Activated T-helper 1 cell treated with anti-CD3 and anti-CD28 coated beads, Interleukin-12 subunit alpha, Interleukin-12 subunit beta, Interleukin-2, Interleukin-4 antibody, amounts not matched to agents 30 ng/mL and 10 ng/mL and 1 ng/mL, durations not matched to agents 14 hours and 24 hours and 36 hours (primary cell): ENCODE measurements at regions of chr20 and their contacts with region 1.

Region 1: DNA sequence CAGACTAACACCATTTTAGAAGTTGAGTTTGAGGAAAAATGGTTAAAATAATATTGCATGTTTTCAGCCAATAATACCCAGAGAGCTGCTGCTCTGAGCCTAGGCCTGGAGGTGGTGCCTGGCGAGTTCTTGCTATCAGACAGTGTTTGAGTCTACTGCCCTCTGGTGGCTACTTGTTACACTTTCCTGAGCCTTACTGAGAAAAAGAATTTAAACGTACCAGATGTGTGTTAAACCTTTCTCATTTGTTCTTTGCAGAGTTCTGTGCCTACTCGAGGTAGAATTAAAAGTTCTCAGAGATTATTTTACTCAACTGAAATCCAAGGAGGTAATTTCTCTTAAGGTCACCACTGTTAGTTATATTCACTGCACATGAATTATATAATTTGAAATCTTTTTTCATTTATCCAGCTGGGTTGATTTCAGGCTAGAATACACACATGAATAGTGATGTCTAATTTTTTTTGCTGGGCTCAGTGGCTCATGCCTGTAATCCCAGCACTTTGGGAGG is 38.2 kb downstream of the SHLD1 start:
- DNase-seq: peak; percentile 66
- H3K4me3 Mint-ChIP-seq: no peak overlapping the region
- H3K27ac Mint-ChIP-seq: no peak overlapping the region
- H3K4me1 Mint-ChIP-seq: peaks cover 5% of the 10 kb centered on the region
- H3K27me3 Mint-ChIP-seq: no peaks in the 10 kb centered on the region

Region 2: DNA sequence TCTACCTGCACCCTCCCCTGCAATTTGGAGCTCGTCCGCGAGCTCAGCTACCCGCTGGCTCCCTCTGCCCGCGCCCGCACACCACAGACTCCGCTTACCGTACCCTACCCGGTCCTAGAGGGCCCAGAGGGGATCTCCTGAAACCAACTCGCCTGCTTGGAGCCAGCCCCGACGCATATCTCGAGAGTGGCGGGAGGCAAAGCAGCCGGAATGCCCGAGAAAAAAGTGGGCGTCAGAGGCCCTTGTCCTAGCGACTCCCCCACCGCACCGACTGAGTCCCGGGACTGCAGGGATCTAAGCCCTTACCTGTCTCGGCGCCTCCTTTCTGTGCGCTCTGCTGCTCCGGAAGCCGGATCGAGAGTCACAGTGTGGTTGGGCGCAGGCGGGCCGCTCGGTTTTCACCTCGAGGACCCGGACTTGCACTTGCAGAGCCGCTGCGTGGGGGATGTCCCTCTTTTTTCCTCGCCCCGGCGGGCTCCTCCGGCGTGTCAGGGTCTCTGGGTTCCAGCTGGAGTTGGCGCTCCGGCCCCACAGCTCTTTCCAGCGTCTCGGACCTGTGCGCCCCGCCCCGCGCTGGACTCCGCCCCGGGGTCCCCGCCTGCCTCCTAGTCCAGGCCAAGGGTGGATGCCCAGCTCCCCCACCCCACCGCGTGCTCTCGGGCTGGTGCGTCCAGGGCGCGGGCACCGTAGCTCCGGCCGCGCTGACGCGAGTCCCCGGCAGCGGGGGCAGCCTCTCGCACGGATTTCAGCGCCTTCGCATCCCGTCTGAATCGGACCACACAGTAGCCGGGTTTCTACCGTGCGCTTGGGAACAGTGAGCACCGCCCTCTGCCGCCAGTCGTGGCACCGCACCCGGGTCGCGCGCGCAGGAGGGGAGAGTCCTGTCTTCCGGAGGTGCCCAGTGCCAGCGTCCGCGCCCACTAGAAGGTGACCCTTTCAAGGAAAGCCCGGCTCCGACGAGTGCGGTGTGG is 472.0 kb before region 1 on chr20 and contains the start of gene PROKR2:
- intact Hi-C with region 1: no loop called
- DNase-seq: no peak
- H3K4me3 Mint-ChIP-seq: no peak within 1 kb of the TSS
- H3K27ac Mint-ChIP-seq: no peak within 1 kb of the TSS
- H3K4me1 Mint-ChIP-seq: no peaks in the 10 kb centered on the region
- H3K27me3 Mint-ChIP-seq: peaks cover 46% of the 10 kb centered on the region
- total RNA-seq, gene PROKR2: not detected in 2 replicates

Region 3: GRCh38 chr20:5529331-5530148 is 258.9 kb before region 1 on chr20:
- intact Hi-C with region 1: loop called (anchors 1 kb)
- DNase-seq: peak; percentile 74
- H3K4me3 Mint-ChIP-seq: peak overlapping the region; percentile 35
- H3K27ac Mint-ChIP-seq: peak overlapping the region; percentile 47
- H3K4me1 Mint-ChIP-seq: peaks cover 26% of the 10 kb centered on the region
- H3K27me3 Mint-ChIP-seq: peaks cover 8% of the 10 kb centered on the region

Region 4: DNA sequence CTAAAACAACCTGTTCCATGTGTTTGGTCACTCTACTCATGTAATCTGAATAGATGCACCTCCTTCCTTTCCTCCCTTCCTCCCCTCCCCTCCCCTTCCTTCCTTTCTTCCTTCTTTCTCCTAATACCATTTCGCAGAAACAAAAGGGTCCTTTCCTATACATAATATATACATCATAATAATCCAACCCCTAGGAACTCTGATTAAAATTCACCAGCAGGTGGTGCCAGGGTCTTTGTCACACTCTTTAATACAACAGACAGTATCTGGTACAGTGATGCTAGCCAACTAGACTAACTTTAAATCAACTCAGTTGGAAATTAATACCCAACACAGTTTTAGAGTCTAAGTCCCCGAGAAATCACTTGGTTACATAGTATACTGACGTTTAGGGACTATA is 219.4 kb before region 1 on chr20:
- intact Hi-C with region 1: loop called (anchors 1 kb)
- DNase-seq: no peak
- H3K4me3 Mint-ChIP-seq: no peak overlapping the region
- H3K27ac Mint-ChIP-seq: peak overlapping the region; percentile 56
- H3K4me1 Mint-ChIP-seq: peaks cover 23% of the 10 kb centered on the region
- H3K27me3 Mint-ChIP-seq: no peaks in the 10 kb centered on the region

Region 5: GRCh38 chr20:5835871-5836270 is 47.4 kb after region 1 on chr20:
- intact Hi-C with region 1: loop called (anchors 1 kb)
- DNase-seq: no peak
- H3K4me3 Mint-ChIP-seq: peak overlapping the region; percentile 28
- H3K27ac Mint-ChIP-seq: peak overlapping the region; percentile 60
- H3K4me1 Mint-ChIP-seq: peaks cover 20% of the 10 kb centered on the region
- H3K27me3 Mint-ChIP-seq: peaks cover 3% of the 10 kb centered on the region

Region 6: DNA sequence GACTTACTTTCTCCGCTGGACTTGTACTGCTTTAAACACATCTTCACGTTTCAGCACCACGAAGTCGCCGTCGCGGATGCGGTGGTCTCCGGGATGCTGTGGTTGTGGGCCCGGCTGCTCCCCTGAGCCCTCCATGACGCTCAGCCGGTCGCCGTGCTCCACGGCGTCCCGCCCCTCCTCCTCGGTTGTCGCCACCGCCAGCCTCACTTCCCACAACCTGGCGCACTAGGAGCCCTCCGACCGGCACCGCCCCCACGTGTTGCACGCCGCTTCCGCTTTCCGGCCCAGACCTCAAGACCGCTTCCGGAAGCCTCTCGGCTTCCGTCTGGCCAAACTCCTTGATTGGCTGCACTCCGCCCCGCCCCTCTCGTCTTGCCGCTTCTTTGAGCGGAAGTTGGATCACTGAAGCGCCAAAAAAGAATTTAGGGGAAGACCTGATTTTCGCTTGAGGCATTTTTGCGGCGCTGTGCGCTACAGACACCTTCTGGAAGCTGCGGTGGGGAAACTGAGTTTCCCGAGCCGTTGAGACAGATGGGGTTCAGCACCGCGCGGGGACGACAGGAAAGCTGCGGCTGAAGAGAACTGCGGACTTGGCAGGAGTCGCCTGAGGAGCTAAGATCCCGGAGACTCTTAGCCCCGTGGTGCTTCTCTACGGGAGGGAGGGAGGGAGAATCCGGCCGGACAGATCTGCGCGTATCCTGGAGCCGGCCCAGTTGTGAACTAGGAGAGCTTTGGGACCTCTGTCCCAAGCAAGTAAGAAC is 162.0 kb after region 1 on chr20 and contains the starts of genes MCM8 and TRMT6:
- intact Hi-C with region 1: loop called (anchors 2 kb)
- DNase-seq: peak; percentile 95
- H3K4me3 Mint-ChIP-seq: peak within 1 kb of the TSS; percentile 90
- H3K27ac Mint-ChIP-seq: peak within 1 kb of the TSS; percentile 91
- H3K4me1 Mint-ChIP-seq: peaks cover 56% of the 10 kb centered on the region
- H3K27me3 Mint-ChIP-seq: peaks cover 2% of the 10 kb centered on the region
- total RNA-seq, gene MCM8: 36.5 and 38.8 TPM in 2 replicates
- total RNA-seq, gene TRMT6: 36.1 and 38.9 TPM in 2 replicates

Region 7: DNA sequence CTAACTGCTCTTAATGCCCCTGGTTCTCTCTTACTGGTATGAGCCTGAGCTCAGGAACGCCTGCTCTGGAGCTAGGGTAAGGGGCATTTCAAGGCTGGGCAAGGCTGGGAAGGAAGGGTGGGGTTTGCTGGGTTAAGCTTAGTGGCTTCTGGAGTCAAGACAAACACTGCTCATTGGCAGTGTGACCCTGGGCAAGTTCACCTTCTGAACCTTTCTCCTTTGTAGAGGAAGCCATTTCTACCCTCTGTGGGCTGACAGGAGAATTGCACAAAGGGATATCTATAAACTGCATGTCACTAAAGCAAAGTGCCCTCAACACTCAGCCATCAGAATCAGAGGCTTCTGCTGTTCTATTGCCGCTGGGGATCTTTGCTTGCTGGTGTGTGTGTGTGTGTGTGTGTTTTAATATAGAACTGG is 285.7 kb after region 1 on chr20:
- intact Hi-C with region 1: loop called (anchors 1 kb)
- DNase-seq: no peak
- H3K4me3 Mint-ChIP-seq: no peak overlapping the region
- H3K27ac Mint-ChIP-seq: no peak overlapping the region
- H3K4me1 Mint-ChIP-seq: no peaks in the 10 kb centered on the region
- H3K27me3 Mint-ChIP-seq: peaks cover 7% of the 10 kb centered on the region